ENCODE measurements at regions of chr13 and their contacts with region 1.

Region 1: DNA sequence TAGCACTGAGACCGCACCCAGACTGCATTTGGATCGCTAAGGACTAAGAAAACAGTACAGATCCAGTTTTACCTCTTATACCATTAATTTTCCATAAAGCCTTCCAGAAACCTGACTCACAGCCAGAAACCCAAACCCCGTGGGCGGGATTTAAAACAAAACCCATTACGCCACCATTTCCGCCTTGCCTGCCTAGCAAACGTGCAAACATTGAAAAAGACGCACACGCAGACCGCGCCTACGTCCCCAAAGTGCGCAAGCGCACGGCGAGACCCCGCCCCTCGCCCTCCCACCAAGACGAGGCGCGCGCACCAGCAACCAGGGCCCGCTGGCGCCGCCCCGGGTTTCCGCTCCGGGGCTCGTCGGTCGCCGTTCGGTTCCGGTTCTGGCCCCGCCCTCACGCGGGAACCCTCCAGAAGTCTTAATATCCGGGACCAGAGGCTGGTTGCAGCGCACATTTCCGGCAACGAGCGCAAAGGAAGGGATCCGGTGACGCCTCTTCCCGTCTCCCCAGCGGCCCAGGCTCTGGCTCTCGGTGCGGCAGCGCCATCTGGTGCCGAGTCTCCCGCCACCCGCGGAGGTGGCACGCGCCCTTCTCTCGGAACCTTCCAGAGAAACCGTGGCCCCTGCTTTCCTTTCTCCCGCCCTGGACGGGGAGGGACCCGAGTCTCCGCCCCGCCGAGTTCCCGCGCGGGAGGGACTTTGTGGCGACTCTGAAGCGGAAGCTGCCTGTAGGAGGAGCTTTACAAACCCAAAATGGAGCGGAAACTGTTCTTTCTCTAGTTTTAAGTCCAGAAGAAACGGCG is 256.9 kb upstream of the STARD13 start:
- DNase-seq: peak; percentile 97 to 100 (median 99)
- ATAC-seq: peak; percentile 79
- H3K4me3 ChIP-seq: peak overlapping the region; percentile 68 to 69
- H3K4me3 Mint-ChIP-seq: peak overlapping the region; percentile 91
- H3K27ac ChIP-seq: peak overlapping the region; percentile 95 to 96
- H3K27ac Mint-ChIP-seq: peak overlapping the region; percentile 99
- H3K4me1 ChIP-seq: peaks cover 28% of the 10 kb centered on the region
- H3K4me1 Mint-ChIP-seq: peaks cover 48% of the 10 kb centered on the region
- H3K27me3 ChIP-seq: no peaks in the 10 kb centered on the region
- H3K27me3 Mint-ChIP-seq: no peaks in the 10 kb centered on the region
- CTCF ChIP-seq: peak; percentile 77

Region 2: DNA sequence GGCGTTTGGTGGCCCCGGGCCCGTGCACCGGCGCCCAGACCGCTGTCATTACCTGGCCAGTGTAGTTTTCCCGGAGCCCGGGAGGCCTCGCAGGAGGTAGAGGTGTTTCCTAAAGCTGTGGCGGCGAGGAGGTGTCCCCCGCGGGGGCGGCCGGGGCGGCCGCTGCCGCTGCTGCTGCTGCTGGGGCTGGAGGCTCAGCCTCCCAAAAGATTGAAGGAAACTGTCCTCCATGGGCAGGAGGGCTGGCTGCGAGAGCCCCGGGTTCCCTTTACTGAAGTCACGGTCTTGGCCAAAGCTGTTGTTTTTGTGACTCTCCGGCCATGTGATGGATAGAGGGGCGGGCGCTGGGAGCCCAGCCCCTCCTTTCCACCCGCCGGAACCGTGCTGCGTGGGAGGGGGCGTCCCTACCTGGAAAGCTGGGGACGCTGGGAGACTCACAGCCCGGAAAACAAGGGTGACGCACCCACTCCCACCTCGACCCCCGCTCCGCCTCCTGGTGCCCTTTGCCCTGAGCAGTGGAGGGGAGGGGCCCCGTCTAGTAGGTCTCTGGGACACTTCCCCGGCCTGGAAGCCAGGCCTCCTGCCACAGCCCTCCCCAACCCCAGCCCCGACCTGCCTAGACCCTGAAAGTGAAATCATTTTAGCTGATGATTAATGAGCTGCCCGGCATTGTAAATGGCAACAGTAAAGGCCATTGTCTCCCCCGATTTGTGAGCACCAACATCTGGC is 1114.5 kb before region 1 on chr13 and contains the start of gene N4BP2L1:
- CTCF ChIA-PET with region 1: no interaction called
- POLR2A ChIA-PET with region 1: interaction called, 3 read pairs
- intact Hi-C with region 1: loop called (anchors 2 kb)
- DNase-seq: peak; percentile 64 to 94 (median 80)
- ATAC-seq: peak; percentile 72
- H3K4me3 ChIP-seq: peak within 1 kb of the TSS; percentile 60 to 72
- H3K4me3 Mint-ChIP-seq: peak within 1 kb of the TSS; percentile 87
- H3K27ac ChIP-seq: peak within 1 kb of the TSS; percentile 85 to 98
- H3K27ac Mint-ChIP-seq: peak within 1 kb of the TSS; percentile 94
- H3K4me1 ChIP-seq: peaks cover 29% of the 10 kb centered on the region
- H3K4me1 Mint-ChIP-seq: peaks cover 39% of the 10 kb centered on the region
- H3K27me3 ChIP-seq: no peaks in the 10 kb centered on the region
- H3K27me3 Mint-ChIP-seq: no peaks in the 10 kb centered on the region
- CTCF ChIP-seq: no peak
- total RNA-seq, gene N4BP2L1: 53.2 to 54.1 TPM

Region 3: DNA sequence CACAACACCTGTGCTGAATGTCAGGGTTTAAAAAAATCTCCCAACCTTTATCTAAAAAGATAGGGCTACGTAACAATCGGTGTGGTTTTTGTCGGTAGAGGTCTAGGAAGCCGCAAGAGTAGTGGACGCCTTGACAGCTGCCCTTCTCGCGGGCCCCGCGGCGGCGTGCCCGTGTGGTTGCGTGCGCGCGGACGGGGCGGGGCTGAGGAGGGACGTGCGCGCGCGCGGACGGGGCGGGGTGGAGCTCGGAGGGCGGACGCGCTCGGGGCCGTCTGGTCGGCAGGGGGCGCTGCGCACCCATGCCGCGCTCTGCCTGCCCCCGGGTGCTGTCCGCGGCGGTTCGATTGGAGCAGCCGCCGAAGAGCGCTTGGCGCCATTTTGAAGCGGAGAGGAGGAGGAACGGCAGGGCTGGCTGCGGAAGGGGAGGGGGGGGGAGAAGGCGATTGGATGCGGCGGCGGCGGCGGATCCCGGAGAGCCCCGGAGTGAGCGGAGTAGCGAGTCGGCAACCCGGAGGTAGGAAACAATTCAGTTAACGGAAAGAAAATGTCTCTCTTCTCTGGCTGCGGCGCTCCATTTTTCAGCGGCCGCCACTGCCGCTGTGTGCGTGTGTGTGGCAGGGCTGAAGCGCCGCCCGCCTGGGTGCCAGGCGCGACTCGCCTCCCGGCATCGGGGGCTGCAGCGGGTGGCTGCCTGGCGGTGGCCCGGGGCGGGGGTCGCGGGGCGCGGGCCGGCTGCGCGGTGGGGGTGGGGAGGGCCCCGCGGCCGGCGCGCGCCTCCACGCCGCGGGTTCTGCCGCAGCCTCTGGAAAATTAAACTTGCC is 956.2 kb before region 1 on chr13 and contains the start of gene PDS5B:
- CTCF ChIA-PET with region 1: interaction called, 4 read pairs
- POLR2A ChIA-PET with region 1: interaction called, 7 read pairs
- intact Hi-C with region 1: loop called (anchors 1 kb)
- DNase-seq: peak; percentile 88 to 98 (median 95)
- ATAC-seq: peak; percentile 89
- H3K4me3 ChIP-seq: peak within 1 kb of the TSS; percentile 75 to 79
- H3K4me3 Mint-ChIP-seq: peak within 1 kb of the TSS; percentile 93
- H3K27ac ChIP-seq: peak within 1 kb of the TSS; percentile 62 to 79
- H3K27ac Mint-ChIP-seq: peak within 1 kb of the TSS; percentile 88
- H3K4me1 ChIP-seq: peaks cover 25% of the 10 kb centered on the region
- H3K4me1 Mint-ChIP-seq: peaks cover 36% of the 10 kb centered on the region
- H3K27me3 ChIP-seq: no peaks in the 10 kb centered on the region
- H3K27me3 Mint-ChIP-seq: no peaks in the 10 kb centered on the region
- CTCF ChIP-seq: peak; percentile 84
- total RNA-seq, gene PDS5B: 44.9 to 45.6 TPM

Region 4: GRCh38 chr13:33033051-33033812 is 509.3 kb before region 1 on chr13:
- CTCF ChIA-PET with region 1: no interaction called
- POLR2A ChIA-PET with region 1: interaction called, 3 read pairs
- intact Hi-C with region 1: loop called in 1 of 2 experiments (anchors 5 kb)
- DNase-seq: peak in 7 of 9 experiments; percentile 4 to 64 (median 27)
- ATAC-seq: peak; percentile 95
- H3K4me3 ChIP-seq: peak overlapping the region in 1 of 2 experiments; percentile 44
- H3K4me3 Mint-ChIP-seq: peak overlapping the region; percentile 84
- H3K27ac ChIP-seq: no peak overlapping the region
- H3K27ac Mint-ChIP-seq: peak overlapping the region; percentile 91
- H3K4me1 ChIP-seq: peaks cover 11% of the 10 kb centered on the region
- H3K4me1 Mint-ChIP-seq: peaks cover 16% of the 10 kb centered on the region
- H3K27me3 ChIP-seq: no peaks in the 10 kb centered on the region
- H3K27me3 Mint-ChIP-seq: peaks cover 12% of the 10 kb centered on the region
- CTCF ChIP-seq: no peak

Region 5: DNA sequence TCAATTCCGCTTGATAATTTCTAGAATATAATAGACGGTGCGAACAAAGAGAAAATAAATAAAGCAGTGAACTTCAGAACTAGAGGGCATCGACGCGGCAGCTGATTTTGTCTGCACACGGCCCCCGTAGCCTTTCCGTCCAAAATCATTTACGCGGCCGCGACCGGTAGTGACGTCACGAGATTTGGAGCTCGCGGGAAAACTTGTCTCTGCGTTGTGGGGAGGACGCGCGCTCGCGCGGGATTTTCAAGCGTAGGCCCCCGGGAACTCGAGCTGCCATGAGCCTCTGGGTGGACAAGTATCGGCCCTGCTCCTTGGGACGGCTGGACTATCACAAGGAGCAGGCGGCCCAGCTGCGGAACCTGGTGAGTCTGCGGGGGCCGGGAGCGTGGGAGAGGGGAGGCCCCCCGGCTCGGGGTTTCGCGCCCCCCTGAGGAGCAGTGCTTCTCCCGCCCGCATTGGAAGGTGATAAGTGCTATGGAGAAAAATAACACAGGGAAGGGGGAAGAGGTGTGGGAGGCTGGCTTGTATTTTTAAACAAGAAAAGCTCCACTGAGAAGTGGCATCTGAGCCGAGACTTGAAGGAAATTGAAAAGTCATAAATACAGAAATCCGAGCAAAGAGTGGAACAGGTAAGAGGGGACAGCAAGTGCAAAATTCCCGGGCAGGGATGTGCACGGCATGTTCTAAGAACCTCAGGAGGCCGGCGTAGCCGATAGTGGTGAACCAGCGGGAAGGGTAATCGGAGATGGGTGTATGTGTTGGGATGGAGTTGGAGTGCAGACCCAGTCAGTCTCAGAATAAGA is 275.6 kb after region 1 on chr13 and contains the start of gene RFC3:
- CTCF ChIA-PET with region 1: no interaction called
- POLR2A ChIA-PET with region 1: interaction called, 13 read pairs
- intact Hi-C with region 1: loop called (anchors 1 to 5 kb)
- DNase-seq: peak; percentile 81 to 95 (median 90)
- ATAC-seq: peak; percentile 86
- H3K4me3 ChIP-seq: peak within 1 kb of the TSS; percentile 72 to 74
- H3K4me3 Mint-ChIP-seq: peak within 1 kb of the TSS; percentile 93
- H3K27ac ChIP-seq: peak within 1 kb of the TSS; percentile 63 to 64
- H3K27ac Mint-ChIP-seq: peak within 1 kb of the TSS; percentile 88
- H3K4me1 ChIP-seq: peaks cover 8% of the 10 kb centered on the region
- H3K4me1 Mint-ChIP-seq: peaks cover 16% of the 10 kb centered on the region
- H3K27me3 ChIP-seq: no peaks in the 10 kb centered on the region
- H3K27me3 Mint-ChIP-seq: peaks cover 4% of the 10 kb centered on the region
- CTCF ChIP-seq: no peak
- total RNA-seq, gene RFC3: 5.8 to 6.2 TPM